H1 (cell line): ENCODE measurements at regions of chr4 and their contacts with region 1.

Region 1: GRCh38 chr4:61590881-61591280 is 390.8 kb downstream of the ADGRL3 start:
- DNase-seq: no peak
- H3K4me3 ChIP-seq: no peak overlapping the region
- H3K27ac ChIP-seq: no peak overlapping the region
- H3K4me1 ChIP-seq: no peaks in the 10 kb centered on the region
- H3K27me3 ChIP-seq: no peaks in the 10 kb centered on the region
- CTCF ChIP-seq: peak in 2 of 3 experiments; percentile 30 to 63; a peak in 2 of 4 replicates
- EP300 ChIP-seq: no peak
- POLR2A ChIP-seq: no peak
- RAD21 ChIP-seq: peak; percentile 61 to 62

Region 2: DNA sequence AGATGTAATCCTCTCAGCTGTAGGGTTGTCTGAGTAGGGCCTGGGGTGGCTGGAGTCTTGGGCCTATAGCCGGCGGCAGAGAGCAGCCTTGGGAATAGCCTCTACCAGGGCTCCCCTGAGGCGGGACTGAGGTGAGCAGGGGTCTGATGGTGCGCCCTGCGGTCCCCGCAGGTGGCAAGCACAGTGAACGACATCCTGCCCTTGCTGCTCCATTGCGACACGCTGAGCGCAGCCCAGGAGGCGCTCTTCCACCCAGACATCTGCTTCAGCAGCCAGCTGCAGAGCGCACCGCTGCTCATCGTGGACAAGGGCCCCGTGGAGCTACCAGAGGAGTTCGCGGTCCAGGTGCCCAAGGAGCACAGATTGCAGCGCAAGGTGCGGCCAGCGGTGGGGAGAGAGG is 73.7 kb before region 1 on chr4:
- CTCF ChIA-PET with region 1: interaction called, 35 read pairs
- POLR2A ChIA-PET with region 1: no interaction called
- DNase-seq: peak; percentile 83 to 90
- H3K4me3 ChIP-seq: peak overlapping the region in 3 of 4 experiments; percentile 4 to 51 (median 17); a peak in 5 of 8 replicates
- H3K27ac ChIP-seq: no peak overlapping the region
- H3K4me1 ChIP-seq: peaks cover 0 to 14% (median 10%) of the 10 kb centered on the region in 4 experiments; a peak in 6 of 7 replicates
- H3K27me3 ChIP-seq: no peaks in the 10 kb centered on the region
- CTCF ChIP-seq: peak; percentile 28 to 64 (median 53)
- EP300 ChIP-seq: peak in 1 of 2 experiments; percentile 8; a peak in 1 of 3 replicates
- POLR2A ChIP-seq: no peak
- RAD21 ChIP-seq: peak; percentile 59 to 66

Region 3: GRCh38 chr4:61603086-61603485 is 12.2 kb after region 1 on chr4:
- CTCF ChIA-PET with region 1: interaction called, 17 read pairs
- POLR2A ChIA-PET with region 1: no interaction called
- DNase-seq: no peak
- H3K4me3 ChIP-seq: no peak overlapping the region
- H3K27ac ChIP-seq: no peak overlapping the region
- H3K4me1 ChIP-seq: no peaks in the 10 kb centered on the region; a peak in 1 of 7 replicates
- H3K27me3 ChIP-seq: no peaks in the 10 kb centered on the region
- CTCF ChIP-seq: no peak
- EP300 ChIP-seq: no peak
- POLR2A ChIP-seq: no peak
- RAD21 ChIP-seq: no peak

Region 4: GRCh38 chr4:61753739-61754138 is 162.9 kb after region 1 on chr4:
- CTCF ChIA-PET with region 1: no interaction called
- POLR2A ChIA-PET with region 1: no interaction called
- DNase-seq: no peak
- H3K4me3 ChIP-seq: no peak overlapping the region
- H3K27ac ChIP-seq: no peak overlapping the region
- H3K4me1 ChIP-seq: no peaks in the 10 kb centered on the region
- H3K27me3 ChIP-seq: no peaks in the 10 kb centered on the region
- CTCF ChIP-seq: no peak
- EP300 ChIP-seq: no peak
- POLR2A ChIP-seq: peak in 1 of 2 experiments; percentile 59; a peak in 1 of 3 replicates
- RAD21 ChIP-seq: no peak